ENCODE measurements at regions of chr1 and their contacts with region 1.

Region 1: DNA sequence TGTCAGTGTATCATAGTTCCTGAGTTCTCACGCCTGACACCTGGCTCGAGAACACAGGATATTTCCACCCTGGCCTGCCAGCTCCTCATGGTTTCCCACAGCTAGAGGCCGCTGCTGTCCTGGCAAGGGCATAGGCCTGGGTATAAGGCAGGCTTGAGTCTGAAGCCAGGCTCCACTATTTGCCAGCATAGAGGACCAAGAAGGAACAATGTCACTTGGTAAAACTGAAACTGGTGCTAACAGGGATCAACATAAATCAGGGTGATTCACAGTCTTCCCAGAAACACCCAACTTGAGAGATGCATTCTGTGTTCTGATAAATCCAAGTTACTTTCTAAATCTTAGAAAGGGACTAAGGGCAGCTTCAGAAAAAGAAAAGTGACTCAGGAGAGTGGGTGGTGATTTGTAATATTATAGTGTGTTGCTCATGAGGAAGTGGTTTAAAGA is 6.9 kb upstream of the S100A2 start:
- DNase-seq: peak; percentile 85
- ATAC-seq: peak; percentile 82
- H3K4me3 Mint-ChIP-seq: no peak overlapping the region
- H3K27ac Mint-ChIP-seq: peak overlapping the region; percentile 83
- H3K4me1 Mint-ChIP-seq: peaks cover 48% of the 10 kb centered on the region
- H3K27me3 Mint-ChIP-seq: peaks cover 2% of the 10 kb centered on the region

Region 2: GRCh38 chr1:153510984-153511410 is 61.6 kb before region 1 on chr1:
- CTCF ChIA-PET with region 1: interaction called, 41 read pairs
- POLR2A ChIA-PET with region 1: no interaction called
- intact Hi-C with region 1: loop called (anchors 1 kb)
- DNase-seq: peak; percentile 90
- ATAC-seq: peak; percentile 95
- H3K4me3 Mint-ChIP-seq: no peak overlapping the region
- H3K27ac Mint-ChIP-seq: peak overlapping the region; percentile 74
- H3K4me1 Mint-ChIP-seq: peaks cover 10% of the 10 kb centered on the region
- H3K27me3 Mint-ChIP-seq: no peaks in the 10 kb centered on the region

Region 3: DNA sequence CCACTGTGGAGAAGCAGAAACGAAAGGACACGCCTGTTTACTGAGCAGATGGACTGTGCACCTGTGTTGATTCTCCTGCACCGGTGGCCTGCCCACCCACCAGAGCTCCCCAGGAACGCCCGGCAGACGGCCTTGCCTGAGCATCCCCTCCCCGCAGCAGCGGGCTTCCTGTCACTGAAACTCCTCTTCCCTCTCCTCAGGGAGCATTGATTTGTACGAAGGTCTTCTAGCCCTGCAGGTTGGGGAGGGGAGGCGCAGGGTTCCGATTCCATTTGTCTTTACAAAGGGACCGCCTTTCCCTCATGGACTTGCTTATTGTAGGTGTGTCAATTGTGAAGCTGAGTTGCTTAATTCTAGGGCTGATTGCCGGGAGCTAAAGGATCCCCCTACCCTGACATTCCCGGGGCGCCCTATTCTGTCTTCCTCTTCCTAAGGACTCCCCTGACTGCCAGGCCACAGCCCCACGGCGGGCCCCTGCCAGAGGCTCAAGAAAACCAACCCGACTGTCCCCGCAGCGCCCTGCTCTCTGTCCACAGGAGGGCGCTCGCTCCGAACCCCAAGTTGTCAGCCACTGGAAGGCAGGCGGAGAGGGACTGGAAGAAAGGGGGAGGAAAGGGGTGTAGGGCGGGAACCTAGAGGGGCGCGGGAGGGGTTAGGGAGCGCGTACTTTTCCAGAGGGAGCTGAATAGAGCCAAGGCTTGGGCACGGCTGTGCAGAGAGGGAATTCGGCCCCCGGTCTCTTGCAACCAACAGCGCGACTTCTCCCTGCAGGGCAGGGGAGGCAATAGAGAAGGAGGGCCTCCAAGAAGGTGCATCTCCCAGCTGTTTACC is 39.6 kb before region 1 on chr1:
- CTCF ChIA-PET with region 1: interaction called, 97 read pairs
- POLR2A ChIA-PET with region 1: interaction called, 7 read pairs
- intact Hi-C with region 1: loop called (anchors 1 kb)
- DNase-seq: peak; percentile 91
- ATAC-seq: peak; percentile 31
- H3K4me3 Mint-ChIP-seq: peak overlapping the region; percentile 89
- H3K27ac Mint-ChIP-seq: peak overlapping the region; percentile 94
- H3K4me1 Mint-ChIP-seq: peaks cover 58% of the 10 kb centered on the region
- H3K27me3 Mint-ChIP-seq: no peaks in the 10 kb centered on the region

Region 4: GRCh38 chr1:153597206-153597605 is 24.6 kb after region 1 on chr1:
- CTCF ChIA-PET with region 1: interaction called, 3 read pairs
- POLR2A ChIA-PET with region 1: no interaction called
- intact Hi-C with region 1: loop called in 1 of 2 experiments (anchors 1 kb)
- DNase-seq: peak; percentile 51
- ATAC-seq: peak; percentile 98
- H3K4me3 Mint-ChIP-seq: no peak overlapping the region
- H3K27ac Mint-ChIP-seq: peak overlapping the region; percentile 63
- H3K4me1 Mint-ChIP-seq: peaks cover 17% of the 10 kb centered on the region
- H3K27me3 Mint-ChIP-seq: no peaks in the 10 kb centered on the region

Region 5: GRCh38 chr1:153633716-153634665 is 61.4 kb after region 1 on chr1 and contains the start of gene CHTOP:
- CTCF ChIA-PET with region 1: interaction called, 10 read pairs
- POLR2A ChIA-PET with region 1: interaction called, 10 read pairs
- intact Hi-C with region 1: loop called (anchors 1 kb)
- DNase-seq: peak; percentile 98
- ATAC-seq: peak; percentile 93
- H3K4me3 Mint-ChIP-seq: peak within 1 kb of the TSS; percentile 98
- H3K27ac Mint-ChIP-seq: peak within 1 kb of the TSS; percentile 98
- H3K4me1 Mint-ChIP-seq: peaks cover 50% of the 10 kb centered on the region
- H3K27me3 Mint-ChIP-seq: no peaks in the 10 kb centered on the region
- total RNA-seq, gene CHTOP: 85.1 to 91.4 TPM

Region 6: GRCh38 chr1:153727463-153728304 is 155.1 kb after region 1 on chr1 and contains the start of gene INTS3:
- CTCF ChIA-PET with region 1: no interaction called
- POLR2A ChIA-PET with region 1: no interaction called
- intact Hi-C with region 1: loop called in 1 of 2 experiments (anchors 5 kb)
- DNase-seq: peak; percentile 99
- ATAC-seq: peak; percentile 99
- H3K4me3 Mint-ChIP-seq: peak within 1 kb of the TSS; percentile 93
- H3K27ac Mint-ChIP-seq: peak within 1 kb of the TSS; percentile 95
- H3K4me1 Mint-ChIP-seq: peaks cover 44% of the 10 kb centered on the region
- H3K27me3 Mint-ChIP-seq: no peaks in the 10 kb centered on the region
- total RNA-seq, gene INTS3: 52.0 to 58.0 TPM

Region 7: DNA sequence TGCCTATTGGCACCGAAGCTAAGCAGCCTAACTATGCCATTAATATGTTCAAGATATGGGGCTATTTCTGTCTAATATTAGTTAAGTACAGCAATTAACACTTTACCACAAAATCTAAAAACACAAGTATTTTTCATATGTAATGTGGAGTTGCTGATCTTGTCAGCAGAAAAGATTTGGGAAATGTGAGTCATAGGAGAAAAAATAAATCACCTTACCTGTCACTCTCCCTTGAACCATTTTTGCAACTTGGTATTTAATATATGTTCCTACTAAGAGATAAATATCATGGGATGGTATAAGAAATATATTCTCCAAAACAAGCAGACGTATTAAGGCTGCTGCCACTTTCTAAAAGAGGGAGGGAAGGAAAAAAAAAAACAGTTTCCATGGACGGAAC is 565.3 kb after region 1 on chr1:
- CTCF ChIA-PET with region 1: no interaction called
- POLR2A ChIA-PET with region 1: no interaction called
- intact Hi-C with region 1: no loop called
- DNase-seq: no peak
- ATAC-seq: peak; percentile 9
- H3K4me3 Mint-ChIP-seq: no peak overlapping the region
- H3K27ac Mint-ChIP-seq: no peak overlapping the region
- H3K4me1 Mint-ChIP-seq: peaks cover 7% of the 10 kb centered on the region
- H3K27me3 Mint-ChIP-seq: no peaks in the 10 kb centered on the region

Region 8: GRCh38 chr1:154272217-154272998 is 699.8 kb after region 1 on chr1 and contains the start of gene HAX1:
- CTCF ChIA-PET with region 1: no interaction called
- POLR2A ChIA-PET with region 1: no interaction called
- intact Hi-C with region 1: loop called in 1 of 2 experiments (anchors 1 kb)
- DNase-seq: peak; percentile 99
- ATAC-seq: peak; percentile 95
- H3K4me3 Mint-ChIP-seq: peak within 1 kb of the TSS; percentile 99
- H3K27ac Mint-ChIP-seq: peak within 1 kb of the TSS; percentile 99
- H3K4me1 Mint-ChIP-seq: peaks cover 37% of the 10 kb centered on the region
- H3K27me3 Mint-ChIP-seq: no peaks in the 10 kb centered on the region
- total RNA-seq, gene HAX1: 177 to 225 TPM

Measured in activated CD4-positive, alpha-beta T cell treated with anti-CD3 and anti-CD28 coated beads for 36 hours (primary cell).